Caco-2 (cell line): ENCODE measurements at regions of chr6 and their contacts with region 1.

Region 1: GRCh38 chr6:130115036-130115435 is 96.7 kb downstream of the L3MBTL3 start:
- DNase-seq: no peak
- H3K4me3 ChIP-seq: no peak overlapping the region
- H3K4me3 Mint-ChIP-seq: no peak overlapping the region
- H3K27ac Mint-ChIP-seq: no peak overlapping the region
- H3K4me1 ChIP-seq: no peaks in the 10 kb centered on the region
- H3K4me1 Mint-ChIP-seq: no peaks in the 10 kb centered on the region
- H3K27me3 ChIP-seq: no peaks in the 10 kb centered on the region
- H3K27me3 Mint-ChIP-seq: no peaks in the 10 kb centered on the region
- CTCF ChIP-seq: no peak

Region 2: GRCh38 chr6:130098317-130098716 is 16.7 kb before region 1 on chr6:
- CTCF ChIA-PET with region 1: interaction called, 10 read pairs
- POLR2A ChIA-PET with region 1: no interaction called
- intact Hi-C with region 1: no loop called
- DNase-seq: no peak
- H3K4me3 ChIP-seq: no peak overlapping the region
- H3K4me3 Mint-ChIP-seq: no peak overlapping the region
- H3K27ac Mint-ChIP-seq: no peak overlapping the region
- H3K4me1 ChIP-seq: no peaks in the 10 kb centered on the region
- H3K4me1 Mint-ChIP-seq: no peaks in the 10 kb centered on the region
- H3K27me3 ChIP-seq: no peaks in the 10 kb centered on the region
- H3K27me3 Mint-ChIP-seq: no peaks in the 10 kb centered on the region
- CTCF ChIP-seq: no peak

Region 3: DNA sequence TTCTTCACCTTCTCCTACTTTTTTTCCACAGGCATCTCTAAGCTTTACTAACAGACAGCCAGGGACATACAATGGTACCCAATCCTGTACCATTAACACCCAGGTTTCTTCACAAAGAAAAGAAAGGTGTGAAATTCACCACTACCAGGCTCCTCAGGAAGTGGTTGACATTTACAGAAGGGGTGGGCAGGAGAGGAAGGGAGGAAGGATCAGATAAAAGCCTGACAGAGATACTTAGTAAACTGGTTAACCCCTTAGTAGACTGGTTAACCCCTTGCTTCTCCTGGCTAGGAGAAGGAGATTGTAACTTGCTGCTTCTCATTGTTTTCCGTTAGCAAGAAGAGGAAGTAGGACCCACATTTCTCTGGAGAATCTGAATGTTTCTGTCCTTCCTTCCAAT is 100.5 kb after region 1 on chr6:
- CTCF ChIA-PET with region 1: no interaction called
- POLR2A ChIA-PET with region 1: no interaction called
- intact Hi-C with region 1: no loop called
- DNase-seq: no peak
- H3K4me3 ChIP-seq: no peak overlapping the region
- H3K4me3 Mint-ChIP-seq: no peak overlapping the region
- H3K27ac Mint-ChIP-seq: no peak overlapping the region
- H3K4me1 ChIP-seq: no peaks in the 10 kb centered on the region
- H3K4me1 Mint-ChIP-seq: no peaks in the 10 kb centered on the region
- H3K27me3 ChIP-seq: no peaks in the 10 kb centered on the region
- H3K27me3 Mint-ChIP-seq: no peaks in the 10 kb centered on the region
- CTCF ChIP-seq: no peak